Body of pancreas (tissue), 4 donors: ENCODE measurements at regions of chr2 and their contacts with region 1.

Region 1: DNA sequence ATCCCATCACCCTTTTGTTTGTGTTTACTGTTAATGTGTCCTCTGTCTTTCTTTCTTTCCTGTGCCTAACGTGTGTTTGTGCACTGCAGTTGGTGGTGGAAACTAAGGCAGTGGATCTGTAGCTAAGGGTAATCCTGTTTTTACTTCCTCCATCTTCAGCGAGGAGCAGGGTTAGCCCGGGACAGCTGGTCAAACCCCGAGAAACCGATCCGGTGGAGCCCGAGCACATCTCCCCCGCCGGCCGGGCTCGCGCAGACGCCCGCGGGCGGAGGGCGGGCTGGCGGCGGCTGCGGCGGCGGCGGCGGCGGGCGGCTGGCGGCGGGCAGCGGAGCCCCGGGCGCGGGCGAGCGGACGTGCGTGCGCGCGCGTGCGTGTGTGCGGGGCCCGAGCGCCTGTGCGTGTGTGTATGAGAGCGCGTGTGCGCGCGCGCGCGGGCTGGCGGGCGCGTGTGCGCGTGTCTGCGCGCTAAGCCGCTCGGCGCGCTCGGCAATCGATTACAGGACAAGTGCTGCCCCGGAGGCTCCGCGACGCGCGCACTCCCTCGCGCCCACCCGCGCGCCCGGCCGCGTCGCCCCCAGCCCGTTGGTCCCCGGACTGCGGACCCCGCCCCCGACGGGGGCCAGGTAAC is at the start of gene IKZF2:
- DNase-seq: peak; percentile 85 to 92 (median 89)
- ATAC-seq: peak; percentile 90
- H3K4me3 ChIP-seq: peak within 1 kb of the TSS; percentile 72 to 84
- H3K27ac ChIP-seq: peak within 1 kb of the TSS; percentile 88 to 98 (median 96)
- H3K4me1 ChIP-seq: peaks cover 26% of the 10 kb centered on the region
- H3K27me3 ChIP-seq: no peaks in the 10 kb centered on the region
- CTCF ChIP-seq: peak in 1 of 7 experiments; percentile 9
- POLR2A ChIP-seq: peak in 2 of 3 donors; percentile 63 to 73
- total RNA-seq, gene IKZF2: 1.3 to 3.9 TPM

Region 2: DNA sequence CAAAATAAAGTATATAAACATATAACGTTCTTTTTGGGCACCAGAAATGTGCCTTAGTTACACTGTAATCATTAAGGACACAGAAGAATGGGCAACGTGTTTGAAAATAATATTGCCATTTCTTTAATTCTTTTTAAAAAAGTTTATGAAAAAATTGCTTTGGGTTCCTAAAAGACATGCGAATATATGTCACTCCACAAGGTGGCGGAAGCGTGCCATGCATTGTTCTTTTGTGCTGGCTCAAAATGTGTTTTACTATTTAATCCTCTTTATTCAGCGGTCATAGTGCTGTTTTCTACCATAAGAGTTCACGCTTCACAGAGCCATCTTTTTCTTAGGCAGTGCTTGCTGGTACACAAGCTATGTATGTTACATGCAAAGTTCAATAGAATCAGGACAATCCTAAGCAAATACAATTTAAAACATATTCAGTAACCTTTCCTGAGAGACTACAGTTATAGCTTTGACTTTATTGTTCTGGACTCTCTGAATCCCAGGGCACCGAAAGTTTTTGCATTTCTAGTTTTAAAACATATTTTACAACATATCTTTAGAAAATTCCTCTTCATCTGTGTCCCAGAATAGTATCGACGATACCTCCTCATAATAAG is 465.2 kb before region 1 on chr2:
- intact Hi-C with region 1: loop called (anchors 10 kb)
- DNase-seq: peak; percentile 62 to 70 (median 65)
- ATAC-seq: peak; percentile 62
- H3K4me3 ChIP-seq: no peak overlapping the region
- H3K27ac ChIP-seq: no peak overlapping the region
- H3K4me1 ChIP-seq: peaks cover 3% of the 10 kb centered on the region
- H3K27me3 ChIP-seq: no peaks in the 10 kb centered on the region
- CTCF ChIP-seq: peak; percentile 79 to 91 (median 84)
- POLR2A ChIP-seq: no peak

Region 3: GRCh38 chr2:212777020-212777491 is 374.5 kb before region 1 on chr2:
- intact Hi-C with region 1: loop called (anchors 10 kb)
- DNase-seq: no peak
- ATAC-seq: no peak
- H3K4me3 ChIP-seq: no peak overlapping the region
- H3K27ac ChIP-seq: no peak overlapping the region
- H3K4me1 ChIP-seq: peaks cover 3% of the 10 kb centered on the region
- H3K27me3 ChIP-seq: no peaks in the 10 kb centered on the region
- CTCF ChIP-seq: peak; percentile 25 to 69 (median 59)
- POLR2A ChIP-seq: no peak